ENCODE measurements at regions of chr7 and their contacts with region 1.

Region 1: DNA sequence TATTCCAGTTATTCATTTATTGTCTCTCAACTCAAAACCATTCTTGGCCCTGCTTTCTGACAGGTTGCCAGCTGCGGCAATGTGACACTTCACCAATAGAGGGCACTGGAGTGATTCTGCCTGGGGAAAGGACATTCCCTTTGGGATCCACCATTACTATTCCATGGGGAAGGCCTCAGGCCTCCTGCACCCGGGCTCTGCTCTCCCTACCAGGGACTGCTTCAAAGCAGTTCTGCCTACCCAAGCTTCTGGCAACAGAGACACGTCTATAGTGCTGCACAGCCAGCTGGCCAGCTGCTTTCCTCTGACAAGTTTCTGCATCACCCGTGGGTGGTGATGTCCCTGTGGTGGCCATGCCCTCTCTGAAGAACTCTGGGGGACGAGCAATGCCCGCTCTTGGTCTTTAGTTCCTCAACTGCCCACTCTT is 163.8 kb downstream of the ELMO1 start:
- DNase-seq: no peak

Region 2: DNA sequence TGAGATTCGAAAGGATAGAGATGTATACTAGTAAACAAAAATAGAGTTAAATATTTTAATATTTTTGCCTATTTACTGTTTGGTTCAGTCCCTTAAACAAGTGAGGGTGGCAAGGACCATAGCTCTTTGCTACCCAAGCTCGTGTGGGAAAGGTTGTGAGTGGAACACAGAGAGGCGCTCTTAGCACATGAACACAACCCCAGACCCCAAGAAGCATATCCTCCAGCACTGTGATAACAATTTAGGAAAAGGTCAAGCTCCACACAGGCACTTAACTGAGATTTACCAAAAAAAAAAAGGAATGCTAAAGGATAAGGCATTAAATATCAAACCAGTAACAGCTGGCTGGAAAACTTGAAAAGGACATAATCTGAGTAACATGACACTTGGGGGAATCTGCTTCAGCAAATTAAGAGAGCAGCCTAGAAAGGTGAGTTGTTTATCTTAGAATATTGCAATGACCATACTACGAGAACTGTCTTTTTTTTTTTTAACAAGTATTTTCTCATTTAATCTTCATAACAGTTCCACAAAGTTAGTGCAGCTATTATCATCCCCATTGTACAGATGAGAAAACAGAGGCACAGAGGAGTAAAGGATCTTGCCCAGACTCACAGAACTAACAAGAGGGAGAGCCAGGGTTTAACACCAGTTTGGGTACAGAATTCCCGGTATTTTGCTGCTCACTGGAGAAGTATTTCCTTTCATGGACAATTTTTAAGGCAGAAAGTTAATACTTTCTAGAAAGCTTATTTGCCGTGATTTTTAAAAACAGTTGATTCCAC is 257.1 kb before region 1 on chr7:
- intact Hi-C with region 1: no loop called
- DNase-seq: no peak

Region 3: GRCh38 chr7:37495574-37496184 is 210.9 kb after region 1 on chr7:
- intact Hi-C with region 1: loop called (anchors 2 kb)
- DNase-seq: no peak

Measured in cardiac septum (tissue), 1 donor.